Endothelial cell of umbilical vein (primary cell): ENCODE measurements at regions of chr14 and their contacts with region 1.

Region 1: DNA sequence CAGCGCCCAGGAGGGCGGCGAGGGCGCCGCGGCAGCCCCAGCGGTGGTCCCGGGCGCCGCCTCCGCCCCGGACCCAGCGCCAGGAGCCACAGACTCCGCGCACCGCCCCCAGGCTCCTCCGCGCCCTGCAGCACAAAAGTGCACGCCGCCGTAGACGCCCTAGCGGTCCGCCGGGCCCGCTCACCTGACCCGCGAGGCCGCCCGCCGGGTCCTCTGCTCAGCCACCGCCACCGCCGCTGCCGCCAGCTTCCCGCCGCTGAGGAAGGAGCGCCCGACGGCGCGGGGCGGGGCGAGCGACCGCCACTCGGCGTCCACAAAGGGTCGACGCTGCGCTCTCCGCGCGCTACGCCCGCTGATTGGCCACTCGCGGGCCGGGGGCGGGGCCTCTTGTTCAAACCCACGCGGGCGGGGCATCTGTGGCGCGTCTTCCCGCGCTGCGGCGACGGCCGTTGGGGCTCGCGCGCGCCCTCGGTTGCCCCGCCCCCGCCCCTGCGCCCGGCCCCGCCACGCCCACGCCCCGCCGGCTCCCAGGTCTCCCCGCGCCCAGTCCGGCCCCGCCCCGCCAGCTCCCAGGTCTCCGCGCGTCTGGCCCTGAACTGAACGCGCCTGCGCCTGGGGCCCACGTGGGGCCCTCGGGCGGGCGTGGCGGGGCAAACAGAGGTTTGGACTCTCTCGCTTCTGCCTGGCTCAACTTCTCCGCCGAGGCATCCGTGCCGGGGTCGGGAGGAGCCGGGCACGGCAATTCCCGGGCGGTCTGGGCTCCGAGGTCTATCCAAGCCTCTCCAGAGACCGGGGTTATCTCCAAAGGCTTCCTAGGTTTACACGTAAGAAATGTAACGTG is at the start of gene CDCA4:
- DNase-seq: peak; percentile 96
- H3K4me3 ChIP-seq: peak within 1 kb of the TSS; percentile 68 to 96 (median 72)
- H3K27ac ChIP-seq: peak within 1 kb of the TSS; percentile 80
- H3K4me1 ChIP-seq: peaks cover 58% of the 10 kb centered on the region
- H3K27me3 ChIP-seq: no peaks in the 10 kb centered on the region
- CTCF ChIP-seq: no peak
- POLR2A ChIP-seq: peak; percentile 80
- total RNA-seq, gene CDCA4: 44.5 and 46.3 TPM in 2 replicates

Region 2: GRCh38 chr14:104976198-104977007 is 44.6 kb before region 1 on chr14:
- CTCF ChIA-PET with region 1: interaction called, 10 read pairs
- POLR2A ChIA-PET with region 1: interaction called, 7 read pairs
- dilution Hi-C with region 1: no loop called
- intact Hi-C with region 1: loop called (anchors 1 kb)
- DNase-seq: peak; percentile 74
- H3K4me3 ChIP-seq: no peak overlapping the region
- H3K27ac ChIP-seq: no peak overlapping the region
- H3K4me1 ChIP-seq: peaks cover 39% of the 10 kb centered on the region
- H3K27me3 ChIP-seq: no peaks in the 10 kb centered on the region
- CTCF ChIP-seq: peak; percentile 90 to 98
- POLR2A ChIP-seq: no peak

Region 3: GRCh38 chr14:104985675-104986525 is 35.1 kb before region 1 on chr14 and contains the start of gene CLBA1:
- CTCF ChIA-PET with region 1: interaction called, 4 read pairs
- POLR2A ChIA-PET with region 1: no interaction called
- dilution Hi-C with region 1: no loop called
- intact Hi-C with region 1: loop called (anchors 1 kb)
- DNase-seq: peak; percentile 90
- H3K4me3 ChIP-seq: peak within 1 kb of the TSS; percentile 45 to 67 (median 65)
- H3K27ac ChIP-seq: peak within 1 kb of the TSS; percentile 65
- H3K4me1 ChIP-seq: peaks cover 4% of the 10 kb centered on the region
- H3K27me3 ChIP-seq: no peaks in the 10 kb centered on the region
- CTCF ChIP-seq: no peak
- POLR2A ChIP-seq: no peak
- total RNA-seq, gene CLBA1: 5.3 and 5.6 TPM in 2 replicates